CD4-positive, alpha-beta T cell (primary cell): ENCODE measurements at regions of chr4 and their contacts with region 1.

Region 1: DNA sequence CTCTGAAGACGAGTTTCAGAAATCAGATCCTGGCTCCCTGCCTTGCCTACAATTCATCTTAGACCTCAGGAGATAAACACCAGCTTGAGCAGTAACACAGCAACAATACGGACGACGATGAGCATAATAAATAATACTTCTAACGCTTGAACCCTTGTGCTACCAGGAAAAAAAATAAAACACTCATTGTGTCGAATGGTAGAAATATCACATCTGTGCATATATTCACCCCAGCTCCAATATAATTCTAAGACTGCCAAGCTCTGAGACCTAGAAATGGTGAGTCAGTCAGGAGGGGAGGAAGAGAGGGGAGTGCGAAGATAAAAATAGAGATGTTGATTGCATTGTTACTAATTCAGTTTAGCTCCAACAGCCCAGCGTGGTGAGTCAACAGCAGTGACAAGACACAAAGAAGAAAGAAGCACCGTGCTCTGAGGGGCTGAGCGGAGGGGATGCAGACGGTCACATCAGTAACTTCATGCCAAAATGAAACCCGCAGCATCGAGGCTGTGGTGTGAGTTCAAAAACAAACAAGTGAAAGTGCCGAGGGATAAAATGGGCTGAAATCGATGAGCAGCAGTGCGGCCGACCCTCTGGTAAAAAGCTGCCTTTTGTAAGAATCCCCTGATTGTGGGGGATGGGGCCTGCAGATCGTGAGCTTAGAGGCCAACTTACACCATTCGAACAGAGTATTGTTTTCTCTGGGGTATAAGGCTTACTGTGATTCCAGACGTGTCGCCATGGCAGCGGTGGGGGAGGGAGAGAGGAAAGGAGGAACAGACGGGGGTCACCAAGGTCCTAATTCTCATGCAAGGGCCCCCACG is 150.4 kb downstream of the MGST2 start:
- DNase-seq: peak in 2 of 14 experiments; percentile 41 to 54
- ATAC-seq: no peak
- H3K4me3 ChIP-seq: no peak overlapping the region
- H3K4me3 Mint-ChIP-seq: no peak overlapping the region
- H3K27ac ChIP-seq: no peak overlapping the region
- H3K27ac Mint-ChIP-seq: no peak overlapping the region
- H3K4me1 ChIP-seq: no peaks in the 10 kb centered on the region
- H3K4me1 Mint-ChIP-seq: no peaks in the 10 kb centered on the region
- H3K27me3 ChIP-seq: no peaks in the 10 kb centered on the region
- H3K27me3 Mint-ChIP-seq: no peaks in the 10 kb centered on the region
- CTCF ChIP-seq: no peak

Region 2: GRCh38 chr4:139833151-139833910 is 17.3 kb after region 1 on chr4:
- CTCF ChIA-PET with region 1: no interaction called
- POLR2A ChIA-PET with region 1: no interaction called
- intact Hi-C with region 1: loop called in 1 of 2 experiments (anchors 1 kb)
- DNase-seq: no peak
- ATAC-seq: no peak
- H3K4me3 ChIP-seq: no peak overlapping the region
- H3K4me3 Mint-ChIP-seq: no peak overlapping the region
- H3K27ac ChIP-seq: no peak overlapping the region
- H3K27ac Mint-ChIP-seq: no peak overlapping the region
- H3K4me1 ChIP-seq: no peaks in the 10 kb centered on the region
- H3K4me1 Mint-ChIP-seq: no peaks in the 10 kb centered on the region
- H3K27me3 ChIP-seq: no peaks in the 10 kb centered on the region
- H3K27me3 Mint-ChIP-seq: no peaks in the 10 kb centered on the region
- CTCF ChIP-seq: no peak

Region 3: DNA sequence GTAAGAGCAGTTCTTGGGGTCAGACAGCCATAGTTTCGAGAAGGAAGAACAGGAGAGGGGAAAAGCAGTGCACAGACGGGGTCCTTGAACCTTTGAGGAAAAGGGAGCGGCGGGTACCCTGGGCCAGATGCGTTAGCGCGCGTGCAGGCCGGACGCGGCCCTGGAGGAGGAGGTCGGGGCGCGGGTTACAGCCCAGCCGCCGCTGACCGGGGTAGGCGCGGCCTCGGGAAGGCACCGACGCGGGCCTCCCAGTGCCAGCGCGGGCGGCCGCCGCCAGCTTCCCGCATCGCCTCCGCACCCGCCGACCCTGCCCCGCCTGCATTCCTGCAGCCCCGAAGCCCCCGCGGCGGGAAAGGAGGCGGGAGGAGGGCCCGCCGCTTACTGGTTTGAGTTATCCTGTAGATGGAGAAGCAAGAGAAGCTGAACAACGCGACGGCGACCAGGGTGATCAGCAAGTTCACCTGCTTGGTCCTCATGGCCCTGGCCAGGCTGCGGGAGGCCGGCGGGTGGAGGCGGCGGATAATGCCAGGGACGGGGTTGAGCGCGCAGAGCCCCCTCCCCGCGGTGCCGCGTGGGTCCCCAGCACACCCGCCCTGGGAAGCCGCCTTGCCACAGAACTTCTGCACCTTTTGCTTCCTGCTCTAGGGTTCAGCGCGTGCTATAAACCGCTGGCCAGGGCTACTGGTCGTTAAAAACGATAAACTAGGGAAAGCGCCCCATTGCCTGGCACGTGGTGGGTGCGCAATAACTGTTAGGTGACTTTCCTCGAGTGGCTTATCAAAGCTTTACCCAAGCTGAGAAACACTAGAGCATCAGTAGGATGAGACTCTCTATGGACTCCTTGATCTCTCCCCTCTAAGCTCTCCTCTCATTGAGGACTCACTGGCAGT is 682.0 kb after region 1 on chr4 and contains the start of gene MGAT4D:
- CTCF ChIA-PET with region 1: no interaction called
- POLR2A ChIA-PET with region 1: no interaction called
- intact Hi-C with region 1: no loop called
- DNase-seq: peak in 1 of 14 experiments; percentile 2
- ATAC-seq: peak; percentile 29
- H3K4me3 ChIP-seq: peak within 1 kb of the TSS; percentile 12
- H3K4me3 Mint-ChIP-seq: peak within 1 kb of the TSS; percentile 72
- H3K27ac ChIP-seq: no peak within 1 kb of the TSS
- H3K27ac Mint-ChIP-seq: no peak within 1 kb of the TSS
- H3K4me1 ChIP-seq: peaks cover 9% of the 10 kb centered on the region
- H3K4me1 Mint-ChIP-seq: peaks cover 3% of the 10 kb centered on the region
- H3K27me3 ChIP-seq: peaks cover 28 to 66% of the 10 kb centered on the region in 2 experiments
- H3K27me3 Mint-ChIP-seq: peaks cover 74% of the 10 kb centered on the region
- CTCF ChIP-seq: no peak
- total RNA-seq, gene MGAT4D: not detected